ENCODE measurements at regions of chr1 and their contacts with region 1.

Region 1: GRCh38 chr1:25099343-25099951 is 132.9 kb downstream of the SYF2 start:
- DNase-seq: peak; percentile 23
- H3K4me3 ChIP-seq: no peak overlapping the region
- H3K27ac ChIP-seq: no peak overlapping the region
- H3K4me1 ChIP-seq: peaks cover 0 to 9% (median 0%) of the 10 kb centered on the region in 4 donors
- H3K27me3 ChIP-seq: no peaks in the 10 kb centered on the region
- CTCF ChIP-seq: no peak
- EP300 ChIP-seq: no peak
- POLR2A ChIP-seq: peak; percentile 19

Region 2: GRCh38 chr1:24847995-24848881 is 251.2 kb before region 1 on chr1:
- in situ Hi-C with region 1: loop called in 2 of 4 experiments (anchors 5 to 10 kb)
- intact Hi-C with region 1: no loop called
- DNase-seq: peak; percentile 95
- H3K4me3 ChIP-seq: peak overlapping the region; percentile 31 to 58 (median 46)
- H3K27ac ChIP-seq: peak overlapping the region; percentile 68 to 84 (median 72)
- H3K4me1 ChIP-seq: peaks cover 0 to 18% (median 9%) of the 10 kb centered on the region in 4 donors
- H3K27me3 ChIP-seq: no peaks in the 10 kb centered on the region
- CTCF ChIP-seq: peak; percentile 93 to 98 (median 96)
- EP300 ChIP-seq: no peak
- POLR2A ChIP-seq: peak; percentile 47

Region 3: GRCh38 chr1:24861821-24862727 is 237.4 kb before region 1 on chr1:
- in situ Hi-C with region 1: loop called in 1 of 4 experiments (anchors 10 kb)
- intact Hi-C with region 1: loop called (anchors 10 kb)
- DNase-seq: peak; percentile 73
- H3K4me3 ChIP-seq: no peak overlapping the region
- H3K27ac ChIP-seq: peak overlapping the region in 3 of 4 donors; percentile 23 to 75 (median 64)
- H3K4me1 ChIP-seq: peaks cover 3 to 35% (median 12%) of the 10 kb centered on the region in 4 donors
- H3K27me3 ChIP-seq: peaks cover 5% of the 10 kb centered on the region
- CTCF ChIP-seq: no peak
- EP300 ChIP-seq: no peak
- POLR2A ChIP-seq: no peak

Region 4: GRCh38 chr1:24930204-24931145 is 169.0 kb before region 1 on chr1 and contains the start of gene RUNX3:
- in situ Hi-C with region 1: loop called in 1 of 4 experiments (anchors 10 kb)
- intact Hi-C with region 1: no loop called
- DNase-seq: peak; percentile 83
- H3K4me3 ChIP-seq: peak within 1 kb of the TSS in 3 of 4 donors; percentile 20 to 45 (median 36)
- H3K27ac ChIP-seq: peak within 1 kb of the TSS; percentile 68 to 81 (median 78)
- H3K4me1 ChIP-seq: peaks cover 3 to 57% (median 31%) of the 10 kb centered on the region in 4 donors
- H3K27me3 ChIP-seq: peaks cover 98% of the 10 kb centered on the region
- CTCF ChIP-seq: no peak
- EP300 ChIP-seq: no peak
- POLR2A ChIP-seq: peak; percentile 18
- total RNA-seq, gene RUNX3: 1.5 to 4.8 (median 3.4) TPM

Region 5: DNA sequence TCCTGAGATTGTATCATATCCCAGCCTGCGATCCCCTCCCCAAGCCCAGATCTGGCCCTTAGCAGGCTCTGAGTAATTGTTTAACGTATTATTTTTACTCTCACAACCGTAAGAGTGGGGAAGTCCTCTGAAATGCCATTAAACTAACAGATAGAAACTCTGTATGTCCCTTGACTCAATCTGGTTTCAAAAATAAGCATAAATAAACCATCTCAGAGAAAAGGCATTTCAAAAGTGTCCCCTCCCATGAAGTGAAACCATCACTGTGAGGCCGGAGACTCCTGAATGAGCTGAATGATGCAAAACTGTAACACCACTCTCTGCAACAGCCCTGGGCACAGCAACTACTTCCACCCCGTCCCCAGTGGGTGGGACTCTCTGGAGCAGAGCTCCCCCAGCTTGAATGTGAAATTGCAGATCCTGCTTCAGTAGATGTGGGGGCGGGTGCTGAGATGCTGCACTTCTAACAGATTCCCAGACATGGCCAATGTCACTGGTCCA is 28.7 kb after region 1 on chr1:
- in situ Hi-C with region 1: no loop called
- intact Hi-C with region 1: no loop called
- DNase-seq: no peak
- H3K4me3 ChIP-seq: no peak overlapping the region
- H3K27ac ChIP-seq: no peak overlapping the region
- H3K4me1 ChIP-seq: no peaks in the 10 kb centered on the region
- H3K27me3 ChIP-seq: no peaks in the 10 kb centered on the region
- CTCF ChIP-seq: no peak
- EP300 ChIP-seq: no peak
- POLR2A ChIP-seq: no peak

Region 6: DNA sequence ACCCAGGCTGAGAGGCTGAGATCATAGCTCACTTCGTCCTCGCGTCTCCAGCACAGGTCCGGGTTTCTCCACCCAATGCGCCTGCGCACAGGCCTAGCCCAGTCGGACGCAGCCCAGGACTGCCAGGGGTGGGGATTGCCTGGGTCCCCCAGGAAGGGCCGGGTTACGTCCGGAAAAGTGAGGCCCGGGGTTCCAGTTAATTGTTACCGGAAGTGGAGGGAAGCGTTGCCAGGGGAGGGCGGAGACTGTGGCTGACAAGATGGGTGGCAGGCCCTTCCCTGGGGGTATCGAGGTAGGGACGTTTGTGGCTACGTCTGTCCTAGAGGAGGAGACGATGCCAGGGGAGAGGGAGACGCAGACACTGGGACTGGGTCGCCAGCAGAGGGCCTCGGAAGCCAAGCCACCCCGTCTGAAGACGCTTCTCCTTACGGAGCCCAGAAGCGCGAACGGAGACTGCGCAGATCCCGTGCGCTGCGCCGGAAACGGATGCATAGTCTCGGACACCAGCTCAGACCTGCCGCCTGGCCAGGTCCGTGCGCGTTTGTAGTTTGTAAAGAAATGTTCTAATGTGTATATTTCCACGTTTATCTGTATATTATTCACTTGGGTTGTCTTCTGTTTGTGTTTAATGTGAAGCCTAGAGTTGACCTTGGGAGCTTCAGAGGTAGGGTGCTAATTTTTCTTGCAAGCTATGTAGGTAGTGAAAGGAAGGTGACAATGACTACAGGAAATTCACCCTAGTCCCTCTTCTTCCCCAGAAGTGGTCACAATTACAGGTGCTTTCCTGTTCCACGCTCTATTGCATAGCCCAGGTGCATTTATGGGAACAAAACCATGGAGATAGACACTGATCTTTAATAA is 140.5 kb after region 1 on chr1:
- in situ Hi-C with region 1: no loop called
- intact Hi-C with region 1: no loop called
- DNase-seq: peak; percentile 94
- H3K4me3 ChIP-seq: peak overlapping the region; percentile 25 to 53 (median 36)
- H3K27ac ChIP-seq: peak overlapping the region; percentile 91 to 95 (median 92)
- H3K4me1 ChIP-seq: peaks cover 18 to 67% (median 28%) of the 10 kb centered on the region in 4 donors
- H3K27me3 ChIP-seq: no peaks in the 10 kb centered on the region
- CTCF ChIP-seq: peak; percentile 42 to 77 (median 50)
- EP300 ChIP-seq: no peak
- POLR2A ChIP-seq: peak; percentile 65

Measured in transverse colon (tissue), 4 donors.